Dorsolateral prefrontal cortex (tissue), 120 donors: ENCODE measurements at regions of chr7 and their contacts with region 1.

Region 1: DNA sequence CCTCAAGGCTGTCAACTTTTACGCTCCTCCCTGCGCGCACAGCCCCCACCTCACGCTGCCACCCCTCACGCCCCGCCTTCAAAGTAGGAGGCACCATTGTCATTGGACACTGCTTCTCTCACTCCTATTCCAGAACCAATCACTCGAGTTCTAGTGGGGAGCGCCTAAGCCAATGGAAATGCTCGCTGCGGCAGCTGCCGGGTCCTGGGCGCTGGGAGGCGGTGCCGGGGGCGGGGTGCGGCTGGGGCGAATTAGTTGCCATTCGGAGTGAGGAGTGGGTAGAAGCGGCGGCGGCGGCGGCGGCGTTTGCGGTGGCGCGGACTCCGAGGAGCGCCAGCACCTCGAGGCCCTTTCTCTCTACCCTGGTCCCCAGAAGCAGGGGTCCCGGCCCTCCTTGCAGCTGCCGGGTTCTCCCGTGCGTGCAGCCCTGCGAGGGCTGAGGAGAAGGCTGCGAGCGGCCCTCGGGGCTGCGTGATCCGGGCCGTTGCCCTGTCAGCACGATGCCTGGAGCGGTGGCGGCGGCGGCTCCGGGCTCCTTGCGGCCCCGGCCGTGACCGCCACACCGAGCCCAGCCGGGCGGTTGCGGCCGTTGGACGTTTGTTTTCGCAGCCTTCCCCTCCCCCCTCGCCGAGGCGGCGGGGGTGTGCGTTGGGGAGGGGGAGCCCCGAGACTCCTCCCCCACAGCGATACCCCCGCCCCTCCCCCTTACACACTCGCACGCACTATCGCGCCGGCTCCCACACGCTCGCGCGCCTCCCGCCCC is at the start of gene GLCCI1:
- DNase-seq: peak; percentile 94 to 99 (median 98)
- H3K4me3 ChIP-seq: peak within 1 kb of the TSS; percentile 77 to 100 (median 96)
- H3K27ac ChIP-seq: peak within 1 kb of the TSS; percentile 90 to 100 (median 100)
- H3K27me3 ChIP-seq: no peaks in the 10 kb centered on the region
- CTCF ChIP-seq: peak in 14 of 56 donors; percentile 9 to 41 (median 19)
- total RNA-seq, gene GLCCI1: 61.6 to 198 (median 112) TPM

Region 2: DNA sequence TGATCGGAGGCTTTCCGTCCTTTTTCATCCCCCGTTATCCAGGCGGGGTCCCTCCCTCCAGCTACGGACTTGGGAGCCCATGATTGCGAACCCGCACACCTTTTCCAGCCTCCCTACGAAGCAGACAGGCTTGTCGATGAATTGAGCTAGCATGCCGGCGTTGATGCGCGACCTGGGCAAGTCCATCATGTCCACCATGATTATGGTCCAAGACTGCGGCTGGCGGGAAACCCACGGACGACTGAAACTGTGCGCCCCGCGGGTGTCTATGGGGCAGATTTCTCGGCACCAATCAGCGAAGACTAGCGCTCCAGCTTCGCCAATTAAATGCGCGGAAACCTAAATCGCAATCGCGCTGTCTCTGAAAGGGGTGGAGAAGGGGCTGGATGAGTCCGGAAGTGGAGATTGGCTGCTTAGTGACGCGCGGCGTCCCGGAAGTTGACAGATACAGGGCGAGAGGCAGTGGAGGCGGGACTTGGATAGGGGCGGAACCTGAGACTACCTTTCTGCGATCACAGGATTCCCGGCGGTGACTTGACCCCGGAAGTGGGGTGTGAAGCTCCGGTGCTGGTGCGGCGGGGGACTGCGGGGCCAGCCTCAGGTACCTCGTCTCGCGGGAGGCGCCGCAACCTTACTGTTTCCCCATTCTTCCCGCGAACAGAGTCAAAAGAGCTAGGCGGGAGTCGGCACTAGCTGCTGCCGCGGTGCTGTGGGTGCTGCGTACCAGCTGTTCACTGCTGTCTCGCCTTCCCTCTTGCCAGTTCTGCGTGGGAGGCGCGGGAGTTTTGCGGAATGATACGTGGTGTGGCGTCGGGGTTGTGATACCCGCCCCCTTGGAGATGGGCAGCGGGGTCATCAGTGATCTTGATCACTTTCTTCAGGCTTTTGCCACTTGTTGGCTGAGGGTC is 328.2 kb before region 1 on chr7 and contains the start of gene UMAD1:
- intact Hi-C with region 1: loop called in 1 of 2 experiments (anchors 5 kb)
- DNase-seq: peak; percentile 98 to 100 (median 99)
- H3K4me3 ChIP-seq: peak within 1 kb of the TSS; percentile 68 to 99 (median 89)
- H3K27ac ChIP-seq: peak within 1 kb of the TSS in 58 of 59 donors; percentile 52 to 94 (median 84)
- H3K27me3 ChIP-seq: no peaks in the 10 kb centered on the region
- CTCF ChIP-seq: peak in 19 of 56 donors; percentile 7 to 44 (median 26)
- total RNA-seq, gene UMAD1: 12.6 to 25.1 (median 18.8) TPM

Region 3: DNA sequence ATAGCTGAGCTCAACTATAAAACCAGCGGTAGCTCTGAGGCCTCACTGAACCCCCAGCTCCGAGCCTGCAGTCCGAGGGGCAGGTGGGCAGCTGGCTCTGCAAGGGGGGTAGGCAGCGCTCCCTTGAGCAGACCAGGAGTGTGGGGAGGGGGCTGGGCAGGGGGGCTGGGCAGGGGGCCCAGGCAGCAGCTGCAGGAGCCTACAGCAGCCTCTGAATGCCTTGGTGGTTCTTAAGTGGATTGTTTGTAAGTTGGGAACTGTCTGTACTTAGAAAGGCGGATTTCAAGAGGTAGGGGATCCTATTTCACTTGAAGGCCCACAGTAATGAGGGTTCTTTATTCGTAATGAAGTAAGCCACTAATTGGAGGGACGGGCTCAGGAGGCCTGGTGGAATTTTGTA is 220.9 kb after region 1 on chr7:
- intact Hi-C with region 1: loop called in 1 of 2 experiments (anchors 5 kb)
- DNase-seq: no peak
- H3K4me3 ChIP-seq: no peak overlapping the region
- H3K27ac ChIP-seq: peak overlapping the region in 21 of 59 donors; percentile 2 to 70 (median 26)
- H3K27me3 ChIP-seq: no peaks in the 10 kb centered on the region
- CTCF ChIP-seq: no peak